ENCODE measurements at regions of chr2 and their contacts with region 1.

Region 1: GRCh38 chr2:8681786-8682692 is at the start of gene ID2:
- DNase-seq: peak; percentile 100
- ATAC-seq: peak; percentile 51 to 71 (median 62)
- H3K4me3 ChIP-seq: peak within 1 kb of the TSS; percentile 83 to 93 (median 91)
- H3K27ac ChIP-seq: peak within 1 kb of the TSS; percentile 98 to 99 (median 98)
- H3K4me1 ChIP-seq: peaks cover 0 to 15% (median 2%) of the 10 kb centered on the region in 4 donors
- H3K27me3 ChIP-seq: no peaks in the 10 kb centered on the region
- CTCF ChIP-seq: no peak
- POLR2A ChIP-seq: peak; percentile 100
- total RNA-seq, gene ID2: 103 to 520 (median 191) TPM

Region 2: DNA sequence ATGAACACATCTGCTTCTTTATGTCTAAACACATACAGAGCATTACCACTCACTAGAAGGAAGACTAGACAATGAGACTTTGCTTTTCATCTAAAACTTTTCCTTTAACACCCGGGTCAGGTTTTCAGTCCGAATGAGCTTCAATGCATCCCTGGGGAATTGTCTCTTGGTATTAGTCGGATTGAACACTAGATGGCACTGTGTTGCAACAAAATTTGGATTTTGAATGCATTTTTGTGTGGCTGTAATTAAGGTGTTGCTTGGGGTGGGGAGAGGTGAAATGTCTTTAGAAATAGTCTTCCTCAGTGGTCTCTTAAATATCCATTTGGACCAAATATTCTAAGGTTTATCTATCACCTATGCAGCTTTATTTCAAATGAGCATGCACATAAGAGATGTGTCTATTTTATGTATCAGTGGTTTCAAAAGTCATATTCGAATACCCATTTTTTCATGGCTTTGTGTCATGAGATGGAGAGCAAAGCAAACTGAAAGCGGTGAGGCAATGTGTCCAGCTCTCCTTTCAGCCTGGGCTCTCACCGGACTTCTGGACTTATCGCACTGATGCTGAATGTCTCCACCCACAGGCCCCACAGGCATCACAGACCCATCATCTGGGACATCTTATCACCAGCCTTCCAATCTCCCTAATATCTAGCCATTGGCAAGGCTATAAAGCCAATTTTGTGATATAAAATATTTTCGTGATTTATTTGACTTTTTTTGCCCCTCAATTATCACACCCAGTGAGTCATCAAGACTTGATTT is 1254.6 kb before region 1 on chr2:
- intact Hi-C with region 1: loop called in 1 of 2 experiments (anchors 10 kb)
- DNase-seq: no peak
- ATAC-seq: peak; percentile 63 to 80 (median 72)
- H3K4me3 ChIP-seq: no peak overlapping the region
- H3K27ac ChIP-seq: no peak overlapping the region
- H3K4me1 ChIP-seq: peaks cover 0 to 5% (median 0%) of the 10 kb centered on the region in 4 donors
- H3K27me3 ChIP-seq: peaks cover 0 to 4% of the 10 kb centered on the region in 2 donors
- CTCF ChIP-seq: peak; percentile 65 to 77 (median 73)
- POLR2A ChIP-seq: no peak

Region 3: DNA sequence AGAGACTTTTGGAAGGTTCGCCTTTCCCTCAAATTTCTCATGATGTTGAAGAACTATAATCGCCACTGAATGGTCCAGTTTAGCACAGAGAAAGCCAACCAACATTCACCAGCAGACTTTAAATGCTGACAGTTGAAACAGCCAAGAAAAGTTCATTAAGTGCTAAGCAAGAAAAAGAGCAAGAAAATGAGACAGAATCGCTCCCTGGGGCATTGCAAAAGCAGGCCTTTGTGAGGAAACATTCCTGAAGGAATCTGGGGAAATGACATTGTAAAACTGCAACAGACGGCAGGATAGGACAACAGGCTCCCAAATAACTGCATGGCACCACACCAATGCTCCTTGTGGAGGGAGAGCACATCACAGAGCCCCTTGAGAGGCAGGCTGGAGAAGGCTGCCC is 269.5 kb before region 1 on chr2:
- intact Hi-C with region 1: loop called in 1 of 2 experiments (anchors 10 kb)
- DNase-seq: no peak
- ATAC-seq: no peak
- H3K4me3 ChIP-seq: no peak overlapping the region
- H3K27ac ChIP-seq: peak overlapping the region; percentile 81 to 96 (median 92)
- H3K4me1 ChIP-seq: peaks cover 0 to 74% (median 36%) of the 10 kb centered on the region in 4 donors
- H3K27me3 ChIP-seq: no peaks in the 10 kb centered on the region
- CTCF ChIP-seq: no peak
- POLR2A ChIP-seq: no peak

Measured in right lobe of liver (tissue), 6 donors.